Mammary epithelial cell (primary cell): ENCODE measurements at regions of chr4 and their contacts with region 1.

Region 1: GRCh38 chr4:15649914-15650545 is 5.1 kb downstream of the FBXL5 start:
- DNase-seq: peak; percentile 49
- H3K4me3 ChIP-seq: no peak overlapping the region
- H3K27ac ChIP-seq: peak overlapping the region; percentile 20
- H3K4me1 ChIP-seq: peaks cover 17% of the 10 kb centered on the region
- H3K27me3 ChIP-seq: no peaks in the 10 kb centered on the region
- CTCF ChIP-seq: peak; percentile 75

Region 2: GRCh38 chr4:15231265-15232091 is 418.6 kb before region 1 on chr4:
- CTCF ChIA-PET with region 1: no interaction called
- dilution Hi-C with region 1: no loop called
- in situ Hi-C with region 1: loop called in 1 of 2 experiments (anchors 25 kb)
- intact Hi-C with region 1: no loop called
- DNase-seq: peak; percentile 68
- H3K4me3 ChIP-seq: no peak overlapping the region
- H3K27ac ChIP-seq: no peak overlapping the region
- H3K4me1 ChIP-seq: peaks cover 30% of the 10 kb centered on the region
- H3K27me3 ChIP-seq: peaks cover 2% of the 10 kb centered on the region
- CTCF ChIP-seq: peak; percentile 69 to 76

Region 3: GRCh38 chr4:15238720-15239119 is 411.3 kb before region 1 on chr4:
- CTCF ChIA-PET with region 1: no interaction called
- dilution Hi-C with region 1: no loop called
- in situ Hi-C with region 1: loop called in 1 of 2 experiments (anchors 25 kb)
- intact Hi-C with region 1: loop called (anchors 1 kb)
- DNase-seq: peak; percentile 25
- H3K4me3 ChIP-seq: no peak overlapping the region
- H3K27ac ChIP-seq: no peak overlapping the region
- H3K4me1 ChIP-seq: peaks cover 13% of the 10 kb centered on the region
- H3K27me3 ChIP-seq: no peaks in the 10 kb centered on the region
- CTCF ChIP-seq: peak; percentile 68 to 79

Region 4: GRCh38 chr4:15385928-15386327 is 264.1 kb before region 1 on chr4:
- CTCF ChIA-PET with region 1: no interaction called
- dilution Hi-C with region 1: no loop called
- in situ Hi-C with region 1: no loop called
- intact Hi-C with region 1: no loop called
- DNase-seq: no peak
- H3K4me3 ChIP-seq: no peak overlapping the region
- H3K27ac ChIP-seq: no peak overlapping the region
- H3K4me1 ChIP-seq: no peaks in the 10 kb centered on the region
- H3K27me3 ChIP-seq: peaks cover 8% of the 10 kb centered on the region
- CTCF ChIP-seq: no peak

Region 5: DNA sequence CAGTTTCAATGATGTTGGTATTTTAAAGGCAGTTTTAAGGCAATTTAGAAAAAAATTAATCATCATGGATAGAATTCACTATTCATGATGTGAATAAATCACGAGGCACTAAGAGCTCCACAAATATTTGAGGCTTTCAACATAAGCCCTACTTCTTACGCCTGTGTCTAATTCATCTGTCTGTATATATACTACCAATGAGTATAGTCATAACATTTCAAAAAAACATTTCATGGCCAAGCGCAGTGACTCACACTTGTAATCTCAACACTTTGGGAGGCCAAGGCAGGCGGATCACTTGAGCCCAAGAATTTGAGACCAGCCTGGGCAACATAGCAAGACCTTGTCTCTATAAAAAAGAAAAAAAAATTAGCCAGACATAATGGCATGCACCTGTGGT is 51.4 kb before region 1 on chr4:
- CTCF ChIA-PET with region 1: no interaction called
- dilution Hi-C with region 1: no loop called
- in situ Hi-C with region 1: no loop called
- intact Hi-C with region 1: no loop called
- DNase-seq: no peak
- H3K4me3 ChIP-seq: no peak overlapping the region
- H3K27ac ChIP-seq: no peak overlapping the region
- H3K4me1 ChIP-seq: no peaks in the 10 kb centered on the region
- H3K27me3 ChIP-seq: no peaks in the 10 kb centered on the region
- CTCF ChIP-seq: no peak

Region 6: DNA sequence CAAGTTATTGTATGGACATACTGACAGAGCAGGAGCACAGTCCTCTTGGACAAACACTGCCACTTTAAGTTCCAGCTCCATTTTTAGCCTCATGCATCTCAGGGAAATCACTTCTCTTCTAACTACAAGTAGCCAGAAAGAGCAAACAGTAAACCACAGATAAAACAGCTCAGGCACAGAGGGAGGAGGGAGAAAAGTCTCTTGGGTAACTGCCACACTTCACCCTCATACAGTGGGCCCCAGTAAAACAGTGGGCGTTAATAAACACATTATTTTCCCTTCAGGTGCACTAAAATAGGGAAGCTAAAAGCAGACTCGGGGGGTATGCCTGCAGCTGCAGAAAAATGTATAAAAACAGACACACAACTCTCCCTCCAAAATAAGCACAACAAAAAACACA is 149.7 kb after region 1 on chr4:
- CTCF ChIA-PET with region 1: no interaction called
- dilution Hi-C with region 1: no loop called
- in situ Hi-C with region 1: no loop called
- intact Hi-C with region 1: loop called (anchors 2 kb)
- DNase-seq: no peak
- H3K4me3 ChIP-seq: no peak overlapping the region
- H3K27ac ChIP-seq: no peak overlapping the region
- H3K4me1 ChIP-seq: no peaks in the 10 kb centered on the region
- H3K27me3 ChIP-seq: peaks cover 3% of the 10 kb centered on the region
- CTCF ChIP-seq: no peak